SK-N-SH (cell line): ENCODE measurements at regions of chr6 and their contacts with region 1.

Region 1: GRCh38 chr6:21593412-21593926 is at the start of gene SOX4:
- DNase-seq: peak; percentile 93
- H3K4me3 ChIP-seq: peak within 1 kb of the TSS; percentile 81 to 95
- H3K27ac ChIP-seq: peak within 1 kb of the TSS; percentile 88 to 98
- H3K4me1 ChIP-seq: peaks cover 6 to 8% of the 10 kb centered on the region in 2 experiments; a peak in 3 of 4 replicates
- H3K27me3 ChIP-seq: no peaks in the 10 kb centered on the region
- CTCF ChIP-seq: no peak
- EP300 ChIP-seq: peak; percentile 36 to 70; a peak in 3 of 4 replicates
- RAD21 ChIP-seq: peak; percentile 34; the same call in 1 of the 2 replicates
- polyA plus RNA-seq, gene SOX4: 5.5 and 5.8 TPM in 2 replicates

Region 2: DNA sequence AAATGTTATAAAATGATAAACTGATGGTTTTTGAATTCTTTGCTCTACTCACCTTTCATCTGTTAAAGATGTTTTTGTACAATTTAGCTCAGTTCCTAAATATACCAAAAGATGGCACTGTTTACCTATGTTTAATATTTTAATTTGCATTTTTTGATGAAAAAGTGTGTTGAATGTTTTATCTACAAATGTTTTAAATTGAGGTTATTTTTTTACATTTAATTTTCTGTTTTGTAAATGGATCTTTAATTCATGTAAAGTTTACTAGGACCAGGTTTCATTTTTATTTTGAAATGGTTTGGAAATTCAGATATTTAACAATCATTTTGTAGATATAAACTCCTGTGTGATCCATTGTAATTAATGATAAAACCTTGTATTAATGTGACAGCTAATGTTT is 1029.2 kb before region 1 on chr6:
- CTCF ChIA-PET with region 1: interaction called, 53 read pairs
- POLR2A ChIA-PET with region 1: interaction called, 15 read pairs
- DNase-seq: no peak
- H3K4me3 ChIP-seq: no peak overlapping the region
- H3K27ac ChIP-seq: peak overlapping the region in 1 of 2 experiments; percentile 92; a peak in 2 of 4 replicates
- H3K4me1 ChIP-seq: peaks cover 5 to 20% of the 10 kb centered on the region in 2 experiments; a peak in 3 of 4 replicates
- H3K27me3 ChIP-seq: no peaks in the 10 kb centered on the region
- CTCF ChIP-seq: peak; percentile 80
- EP300 ChIP-seq: no peak
- RAD21 ChIP-seq: peak; percentile 60

Region 3: DNA sequence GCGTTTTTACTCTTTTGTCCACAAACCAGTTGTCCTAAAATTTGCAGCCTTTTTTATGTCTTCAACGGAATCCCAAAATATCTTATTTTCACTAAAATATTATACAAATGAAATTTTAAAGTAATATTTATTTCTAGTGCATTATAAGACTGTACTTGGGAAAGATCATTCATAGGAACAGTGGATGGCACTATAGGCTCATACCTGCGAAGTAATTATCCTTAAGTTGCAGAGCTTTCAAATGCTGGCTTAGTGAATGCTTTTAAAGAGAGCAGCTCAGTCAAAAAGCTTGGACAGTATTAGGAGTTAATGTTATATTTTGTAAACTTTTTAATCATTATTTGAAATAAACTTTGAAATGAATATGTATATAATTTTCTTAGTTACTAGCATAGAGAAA is 804.3 kb before region 1 on chr6:
- CTCF ChIA-PET with region 1: interaction called, 19 read pairs
- POLR2A ChIA-PET with region 1: interaction called, 5 read pairs
- DNase-seq: no peak
- H3K4me3 ChIP-seq: no peak overlapping the region
- H3K27ac ChIP-seq: no peak overlapping the region
- H3K4me1 ChIP-seq: peaks cover 11% of the 10 kb centered on the region in 2 experiments; a peak in 2 of 4 replicates
- H3K27me3 ChIP-seq: no peaks in the 10 kb centered on the region
- CTCF ChIP-seq: peak; percentile 27; the same call in 1 of the 2 replicates
- EP300 ChIP-seq: no peak
- RAD21 ChIP-seq: peak; percentile 78

Region 4: GRCh38 chr6:21201637-21202350 is 391.7 kb before region 1 on chr6:
- CTCF ChIA-PET with region 1: interaction called, 3 read pairs
- POLR2A ChIA-PET with region 1: interaction called, 41 read pairs
- DNase-seq: peak; percentile 47
- H3K4me3 ChIP-seq: no peak overlapping the region
- H3K27ac ChIP-seq: peak overlapping the region in 1 of 2 experiments; percentile 99; a peak in 3 of 4 replicates
- H3K4me1 ChIP-seq: peaks cover 15 to 39% of the 10 kb centered on the region in 2 experiments; a peak in 3 of 4 replicates
- H3K27me3 ChIP-seq: no peaks in the 10 kb centered on the region
- CTCF ChIP-seq: no peak
- EP300 ChIP-seq: 0 out of 4 replicates have a peak, but pooled peaks of 1 of the 2 experiments have one; percentile 5
- RAD21 ChIP-seq: peak; percentile 32

Region 5: DNA sequence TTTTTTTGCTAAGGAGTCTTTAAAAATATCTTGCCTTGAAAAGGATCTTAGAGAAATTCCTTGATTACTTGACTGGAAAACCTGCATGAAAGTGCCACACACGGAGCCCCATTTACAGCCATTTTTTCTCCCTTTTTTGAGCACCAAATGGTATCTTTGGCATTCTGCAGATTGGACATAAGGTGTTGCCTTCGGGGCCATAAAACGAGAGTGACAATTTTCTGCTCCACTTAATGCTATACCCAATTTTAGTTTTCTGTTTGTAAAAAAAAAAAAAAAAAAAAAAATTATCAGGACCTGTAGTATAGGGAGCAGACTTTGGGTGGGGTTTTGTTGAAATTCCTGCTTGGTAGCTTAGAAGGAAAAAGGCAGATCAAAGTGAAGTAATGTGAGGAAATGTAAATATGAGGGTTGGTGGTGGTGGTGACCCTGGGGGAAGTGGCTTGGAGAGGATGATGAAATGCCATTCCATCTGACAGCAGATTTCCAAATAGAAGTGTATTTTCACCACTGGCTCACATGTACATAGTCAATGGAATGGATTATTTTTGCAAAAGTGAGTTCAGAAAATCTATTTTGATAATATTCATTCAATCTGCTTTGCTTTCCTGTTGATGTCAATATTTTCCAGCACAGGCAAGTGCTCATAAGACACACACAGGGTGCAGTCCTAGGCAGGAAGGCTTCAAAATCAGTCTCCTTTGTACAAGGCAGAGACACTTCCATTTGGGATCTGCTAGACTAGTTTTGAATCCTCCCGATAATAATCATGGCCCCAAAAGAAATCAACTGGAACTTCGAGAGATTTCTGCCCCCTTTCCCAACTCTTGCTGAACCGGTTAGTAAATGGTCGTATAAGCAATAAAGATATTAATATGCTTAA is 211.9 kb before region 1 on chr6:
- CTCF ChIA-PET with region 1: interaction called, 19 read pairs
- POLR2A ChIA-PET with region 1: interaction called, 42 read pairs
- DNase-seq: no peak
- H3K4me3 ChIP-seq: no peak overlapping the region
- H3K27ac ChIP-seq: peak overlapping the region in 1 of 2 experiments; percentile 99; a peak in 2 of 4 replicates
- H3K4me1 ChIP-seq: peaks cover 0 to 28% of the 10 kb centered on the region in 2 experiments; a peak in 2 of 4 replicates
- H3K27me3 ChIP-seq: no peaks in the 10 kb centered on the region
- CTCF ChIP-seq: no peak
- EP300 ChIP-seq: no peak
- RAD21 ChIP-seq: no peak

Region 6: GRCh38 chr6:21999012-21999528 is 405.6 kb after region 1 on chr6:
- CTCF ChIA-PET with region 1: interaction called, 5 read pairs
- POLR2A ChIA-PET with region 1: interaction called, 35 read pairs
- DNase-seq: peak; percentile 61
- H3K4me3 ChIP-seq: no peak overlapping the region
- H3K27ac ChIP-seq: peak overlapping the region; percentile 84 to 99
- H3K4me1 ChIP-seq: peaks cover 45 to 55% of the 10 kb centered on the region in 2 experiments
- H3K27me3 ChIP-seq: no peaks in the 10 kb centered on the region
- CTCF ChIP-seq: no peak
- EP300 ChIP-seq: peak; percentile 67 to 97; a peak in 3 of 4 replicates
- RAD21 ChIP-seq: peak; percentile 50

Region 7: DNA sequence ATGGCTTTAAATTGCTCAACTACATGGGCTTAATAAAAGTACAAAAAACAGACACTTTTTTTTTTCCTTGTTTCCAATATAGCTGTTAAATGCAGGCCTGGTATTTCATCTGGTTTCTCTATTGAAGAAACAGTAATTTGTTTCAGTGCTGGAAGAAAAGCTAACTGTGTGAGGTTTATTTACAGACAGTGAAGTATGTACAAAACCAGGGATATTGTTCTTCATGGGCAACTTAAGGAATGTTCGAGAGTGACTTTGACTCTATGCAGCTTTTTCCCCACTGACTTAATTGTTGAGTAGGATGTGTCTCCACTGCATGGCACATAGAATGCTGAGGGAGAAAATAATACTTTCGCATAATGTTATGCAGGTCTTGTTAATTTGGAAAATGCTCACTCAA is 734.4 kb after region 1 on chr6:
- CTCF ChIA-PET with region 1: no interaction called
- POLR2A ChIA-PET with region 1: interaction called, 24 read pairs
- DNase-seq: no peak
- H3K4me3 ChIP-seq: no peak overlapping the region
- H3K27ac ChIP-seq: peak overlapping the region; percentile 39 to 98; a peak in 3 of 4 replicates
- H3K4me1 ChIP-seq: peaks cover 0 to 33% of the 10 kb centered on the region in 2 experiments; a peak in 2 of 4 replicates
- H3K27me3 ChIP-seq: no peaks in the 10 kb centered on the region
- CTCF ChIP-seq: no peak
- EP300 ChIP-seq: no peak
- RAD21 ChIP-seq: no peak; the same call in 1 of the 2 replicates